HEK293 (cell line): ENCODE measurements at regions of chr5 and their contacts with region 1.

Region 1: GRCh38 chr5:96614110-96614691 is 48.0 kb upstream of the CAST start:
- H3K4me3 ChIP-seq: no peak overlapping the region
- H3K27ac ChIP-seq: no peak overlapping the region
- H3K4me1 ChIP-seq: no peaks in the 10 kb centered on the region
- CTCF ChIP-seq: peak; percentile 71

Region 2: GRCh38 chr5:96601811-96602244 is 12.4 kb before region 1 on chr5:
- CTCF ChIA-PET with region 1: interaction called, 32 read pairs
- POLR2A ChIA-PET with region 1: interaction called, 4 read pairs
- H3K4me3 ChIP-seq: no peak overlapping the region
- H3K27ac ChIP-seq: no peak overlapping the region
- H3K4me1 ChIP-seq: no peaks in the 10 kb centered on the region
- CTCF ChIP-seq: 0 out of 2 replicates have a peak, but pooled peaks have one; percentile 30

Region 3: DNA sequence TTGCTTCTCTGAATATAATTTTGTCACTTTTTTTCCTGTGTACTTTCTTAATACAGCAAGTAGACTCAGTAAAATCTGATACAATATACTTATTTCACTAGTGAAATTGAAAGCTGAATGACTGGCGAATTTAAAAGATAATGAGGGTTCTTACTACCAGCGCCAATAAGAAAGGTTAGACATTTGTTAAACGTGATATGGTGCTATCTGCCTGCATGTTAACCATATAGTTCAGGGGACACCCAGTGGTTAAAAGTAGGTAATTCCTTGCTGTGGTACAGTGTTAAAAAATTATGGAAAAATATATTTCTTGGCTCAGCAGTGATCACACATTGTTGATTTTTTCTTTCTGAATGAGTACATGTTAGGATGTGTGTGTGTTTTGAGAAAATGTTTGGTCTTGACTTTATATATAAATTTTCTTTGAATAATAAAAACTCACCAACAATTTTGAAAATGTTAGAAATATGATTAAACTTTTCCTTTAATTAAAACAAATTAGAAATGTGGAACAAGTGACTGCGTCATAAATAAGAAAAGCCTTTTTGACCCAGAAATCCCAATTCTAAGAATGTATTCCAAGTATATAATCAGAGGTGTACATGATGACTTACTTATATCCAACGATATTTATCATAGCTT is 73.7 kb after region 1 on chr5:
- CTCF ChIA-PET with region 1: interaction called, 110 read pairs
- POLR2A ChIA-PET with region 1: no interaction called
- H3K4me3 ChIP-seq: no peak overlapping the region
- H3K27ac ChIP-seq: no peak overlapping the region
- H3K4me1 ChIP-seq: no peaks in the 10 kb centered on the region
- CTCF ChIP-seq: no peak; the same call in 1 of the 2 replicates

Region 4: GRCh38 chr5:96752341-96753016 is 138.3 kb after region 1 on chr5:
- CTCF ChIA-PET with region 1: interaction called, 10 read pairs
- POLR2A ChIA-PET with region 1: no interaction called
- H3K4me3 ChIP-seq: no peak overlapping the region
- H3K27ac ChIP-seq: no peak overlapping the region
- H3K4me1 ChIP-seq: no peaks in the 10 kb centered on the region
- CTCF ChIP-seq: peak; percentile 29; the same call in 1 of the 2 replicates

Region 5: DNA sequence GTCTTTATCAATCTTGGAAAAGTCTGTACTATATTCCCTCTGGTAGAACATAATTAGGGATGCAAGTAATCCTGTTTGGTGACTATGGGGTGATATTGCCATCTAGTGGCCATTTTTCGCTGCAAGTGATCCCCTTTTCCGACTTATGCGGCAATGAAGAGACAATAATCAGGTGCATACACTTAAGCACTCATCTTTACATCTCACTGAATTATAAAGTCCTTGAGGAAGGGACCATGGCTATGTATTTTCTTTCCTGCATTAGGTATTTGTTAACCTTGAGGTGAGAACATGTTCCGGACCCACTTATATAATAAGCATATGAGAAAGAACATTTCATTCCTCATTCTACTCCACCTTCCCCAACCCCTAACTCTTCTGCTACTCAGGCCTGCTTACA is 547.8 kb after region 1 on chr5:
- CTCF ChIA-PET with region 1: interaction called, 61 read pairs
- POLR2A ChIA-PET with region 1: no interaction called
- H3K4me3 ChIP-seq: no peak overlapping the region
- H3K27ac ChIP-seq: no peak overlapping the region
- H3K4me1 ChIP-seq: no peaks in the 10 kb centered on the region
- CTCF ChIP-seq: 0 out of 2 replicates have a peak, but pooled peaks have one; percentile 60